ENCODE measurements at regions of chr2 and their contacts with region 1.

Region 1: GRCh38 chr2:120174963-120175581 is 48.1 kb downstream of the TMEM185B start:
- DNase-seq: peak; percentile 79
- ATAC-seq: peak; percentile 87
- H3K4me3 ChIP-seq: no peak overlapping the region
- H3K27ac ChIP-seq: no peak overlapping the region
- H3K4me1 ChIP-seq: peaks cover 3% of the 10 kb centered on the region
- H3K27me3 ChIP-seq: no peaks in the 10 kb centered on the region
- CTCF ChIP-seq: peak; percentile 86
- POLR2A ChIP-seq: 0 out of 2 replicates have a peak, but pooled peaks have one; percentile 22
- RAD21 ChIP-seq: peak; percentile 91

Region 2: GRCh38 chr2:119702918-119703401 is 472.1 kb before region 1 on chr2:
- CTCF ChIA-PET with region 1: interaction called, 7 read pairs
- POLR2A ChIA-PET with region 1: no interaction called
- dilution Hi-C with region 1: no loop called
- in situ Hi-C with region 1: loop called (anchors 5 kb)
- intact Hi-C with region 1: loop called (anchors 1 kb)
- DNase-seq: peak; percentile 46
- ATAC-seq: peak; percentile 99
- H3K4me3 ChIP-seq: no peak overlapping the region
- H3K27ac ChIP-seq: no peak overlapping the region
- H3K4me1 ChIP-seq: no peaks in the 10 kb centered on the region
- H3K27me3 ChIP-seq: peaks cover 14% of the 10 kb centered on the region; the same call in 1 of the 2 replicates
- CTCF ChIP-seq: peak; percentile 91
- POLR2A ChIP-seq: no peak
- RAD21 ChIP-seq: peak; percentile 91

Region 3: GRCh38 chr2:119826370-119826961 is 348.6 kb before region 1 on chr2:
- CTCF ChIA-PET with region 1: no interaction called
- POLR2A ChIA-PET with region 1: no interaction called
- dilution Hi-C with region 1: no loop called
- in situ Hi-C with region 1: no loop called
- intact Hi-C with region 1: loop called (anchors 1 kb)
- DNase-seq: peak; percentile 21
- ATAC-seq: peak; percentile 50; the same call in 1 of the 2 replicates
- H3K4me3 ChIP-seq: no peak overlapping the region
- H3K27ac ChIP-seq: no peak overlapping the region
- H3K4me1 ChIP-seq: peaks cover 4% of the 10 kb centered on the region
- H3K27me3 ChIP-seq: no peaks in the 10 kb centered on the region
- CTCF ChIP-seq: peak; percentile 50
- POLR2A ChIP-seq: no peak
- RAD21 ChIP-seq: peak; percentile 56

Region 4: DNA sequence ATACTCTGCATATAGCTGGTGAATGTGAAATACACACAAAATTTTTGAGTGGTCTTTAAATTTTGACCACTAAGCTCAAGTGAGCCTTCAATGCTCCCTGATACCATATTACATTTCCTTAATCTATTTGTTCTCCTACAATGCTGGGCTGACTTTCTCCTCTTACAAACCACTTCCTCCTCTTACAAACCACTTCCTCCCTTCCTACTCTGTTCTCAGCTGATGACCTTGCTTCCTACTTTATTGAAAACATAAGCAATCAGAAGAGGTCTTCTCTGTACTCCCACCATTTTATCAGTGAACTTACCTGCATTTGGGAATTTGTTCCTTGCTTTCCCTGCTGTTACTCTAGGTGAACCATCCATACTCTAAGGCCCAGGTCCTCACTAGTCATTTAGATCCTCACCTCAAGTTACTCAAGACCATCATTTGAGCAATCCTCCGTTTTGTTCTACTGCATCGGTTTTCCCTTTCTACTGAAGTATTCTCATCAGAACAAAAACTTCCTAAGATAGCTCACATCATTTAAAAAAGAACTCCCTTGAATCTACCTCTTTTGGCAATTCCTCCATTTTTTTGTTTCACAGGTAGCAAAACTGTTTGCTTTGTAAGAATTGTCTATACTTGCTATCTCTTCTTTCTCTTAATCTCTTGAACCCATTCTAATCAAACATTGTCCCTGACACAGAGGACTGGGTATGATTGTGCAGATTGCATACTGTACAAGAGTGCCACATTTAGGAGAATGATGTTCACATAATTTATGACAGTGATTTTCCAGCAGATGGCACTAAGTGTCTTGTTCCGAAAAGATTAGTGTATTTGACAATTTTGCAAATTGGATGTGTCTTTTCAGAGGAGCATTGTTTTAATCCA is 65.6 kb before region 1 on chr2:
- CTCF ChIA-PET with region 1: interaction called, 36 read pairs
- POLR2A ChIA-PET with region 1: no interaction called
- dilution Hi-C with region 1: no loop called
- in situ Hi-C with region 1: loop called (anchors 5 kb)
- intact Hi-C with region 1: loop called (anchors 1 kb)
- DNase-seq: peak; percentile 59
- ATAC-seq: peak; percentile 71
- H3K4me3 ChIP-seq: no peak overlapping the region
- H3K27ac ChIP-seq: no peak overlapping the region
- H3K4me1 ChIP-seq: no peaks in the 10 kb centered on the region; the same call in none of the 2 replicates
- H3K27me3 ChIP-seq: no peaks in the 10 kb centered on the region
- CTCF ChIP-seq: peak; percentile 54
- POLR2A ChIP-seq: no peak
- RAD21 ChIP-seq: peak; percentile 67